ENCODE measurements at regions of chr15 and their contacts with region 1.

Region 1: GRCh38 chr15:39976291-39977274 is 42.7 kb downstream of the EIF2AK4 start:
- DNase-seq: peak; percentile 39
- H3K4me3 ChIP-seq: peak overlapping the region; percentile 4 to 51 (median 46)
- H3K27ac ChIP-seq: peak overlapping the region; percentile 14
- H3K4me1 ChIP-seq: peaks cover 13% of the 10 kb centered on the region
- H3K27me3 ChIP-seq: no peaks in the 10 kb centered on the region
- CTCF ChIP-seq: peak; percentile 22 to 55

Region 2: GRCh38 chr15:39686000-39686613 is 290.5 kb before region 1 on chr15:
- CTCF ChIA-PET with region 1: no interaction called
- dilution Hi-C with region 1: no loop called
- in situ Hi-C with region 1: no loop called
- intact Hi-C with region 1: loop called (anchors 1 kb)
- DNase-seq: peak; percentile 36
- H3K4me3 ChIP-seq: no peak overlapping the region
- H3K27ac ChIP-seq: no peak overlapping the region
- H3K4me1 ChIP-seq: no peaks in the 10 kb centered on the region
- H3K27me3 ChIP-seq: no peaks in the 10 kb centered on the region
- CTCF ChIP-seq: peak; percentile 70 to 71

Region 3: DNA sequence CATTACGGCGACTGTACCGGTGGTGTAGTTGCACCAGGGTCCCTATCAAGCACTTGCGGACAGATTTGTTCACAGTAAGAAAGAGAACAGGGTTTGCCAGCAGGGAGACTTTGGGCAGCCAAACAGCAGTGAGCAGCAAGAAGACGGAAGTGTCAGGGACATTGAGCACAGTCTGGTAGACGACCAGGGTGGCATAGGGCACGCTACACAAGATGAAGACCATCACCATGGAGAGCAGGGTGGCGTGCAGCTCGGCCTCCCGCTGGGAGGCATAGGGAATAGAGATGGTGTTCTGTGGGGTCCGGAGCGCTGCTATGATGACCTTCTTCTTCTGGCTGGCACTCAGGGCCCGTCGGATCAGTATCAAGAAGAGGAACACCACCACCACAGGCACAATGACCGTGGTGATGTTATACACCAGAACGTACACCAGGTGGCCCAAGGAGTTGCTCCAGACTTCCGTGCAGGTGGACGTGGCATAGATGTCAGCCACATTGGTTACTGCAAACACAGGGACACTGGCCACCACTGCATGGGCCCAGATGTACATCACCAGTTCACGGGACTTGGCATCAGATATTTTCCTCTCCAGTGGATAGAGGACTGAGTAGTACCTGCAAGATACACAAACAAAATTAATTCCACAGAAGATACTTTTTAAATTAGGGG is 174.8 kb before region 1 on chr15:
- CTCF ChIA-PET with region 1: no interaction called
- dilution Hi-C with region 1: no loop called
- in situ Hi-C with region 1: loop called in 1 of 2 experiments (anchors 25 kb)
- intact Hi-C with region 1: loop called (anchors 5 kb)
- DNase-seq: peak; percentile 28
- H3K4me3 ChIP-seq: no peak overlapping the region
- H3K27ac ChIP-seq: no peak overlapping the region
- H3K4me1 ChIP-seq: peaks cover 16% of the 10 kb centered on the region
- H3K27me3 ChIP-seq: no peaks in the 10 kb centered on the region
- CTCF ChIP-seq: peak; percentile 58 to 70

Region 4: DNA sequence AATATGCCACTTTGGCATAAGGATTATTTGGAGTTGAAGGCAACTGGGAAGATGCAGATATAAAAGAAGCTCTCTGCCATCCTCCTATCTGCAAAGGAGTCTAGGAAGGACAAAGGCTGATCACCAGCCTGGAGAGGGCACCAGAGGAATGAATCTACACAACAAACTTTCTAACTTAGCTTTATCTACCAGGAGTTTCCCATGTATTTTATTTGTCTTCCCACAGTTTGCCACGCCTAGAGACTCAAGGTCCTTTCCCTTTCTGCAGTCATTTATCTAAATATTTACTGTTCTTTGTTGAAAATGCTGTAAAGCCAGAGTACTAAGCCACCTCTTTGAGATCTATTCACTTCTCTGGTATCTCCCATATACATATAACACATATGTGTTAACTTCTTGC is 88.8 kb before region 1 on chr15:
- CTCF ChIA-PET with region 1: interaction called, 4 read pairs
- dilution Hi-C with region 1: loop called (anchors 5 kb)
- in situ Hi-C with region 1: no loop called
- intact Hi-C with region 1: loop called (anchors 1 kb)
- DNase-seq: peak; percentile 65
- H3K4me3 ChIP-seq: no peak overlapping the region
- H3K27ac ChIP-seq: no peak overlapping the region
- H3K4me1 ChIP-seq: peaks cover 42% of the 10 kb centered on the region
- H3K27me3 ChIP-seq: no peaks in the 10 kb centered on the region
- CTCF ChIP-seq: peak; percentile 20 to 64

Region 5: GRCh38 chr15:40054605-40055545 is 78.3 kb after region 1 on chr15:
- CTCF ChIA-PET with region 1: no interaction called
- dilution Hi-C with region 1: no loop called
- in situ Hi-C with region 1: no loop called
- intact Hi-C with region 1: no loop called
- DNase-seq: peak; percentile 47
- H3K4me3 ChIP-seq: no peak overlapping the region
- H3K27ac ChIP-seq: no peak overlapping the region
- H3K4me1 ChIP-seq: peaks cover 23% of the 10 kb centered on the region
- H3K27me3 ChIP-seq: no peaks in the 10 kb centered on the region
- CTCF ChIP-seq: no peak

Measured in mammary epithelial cell (primary cell).